Endothelial cell of umbilical vein (primary cell): ENCODE measurements at regions of chr15 and their contacts with region 1.

Region 1: DNA sequence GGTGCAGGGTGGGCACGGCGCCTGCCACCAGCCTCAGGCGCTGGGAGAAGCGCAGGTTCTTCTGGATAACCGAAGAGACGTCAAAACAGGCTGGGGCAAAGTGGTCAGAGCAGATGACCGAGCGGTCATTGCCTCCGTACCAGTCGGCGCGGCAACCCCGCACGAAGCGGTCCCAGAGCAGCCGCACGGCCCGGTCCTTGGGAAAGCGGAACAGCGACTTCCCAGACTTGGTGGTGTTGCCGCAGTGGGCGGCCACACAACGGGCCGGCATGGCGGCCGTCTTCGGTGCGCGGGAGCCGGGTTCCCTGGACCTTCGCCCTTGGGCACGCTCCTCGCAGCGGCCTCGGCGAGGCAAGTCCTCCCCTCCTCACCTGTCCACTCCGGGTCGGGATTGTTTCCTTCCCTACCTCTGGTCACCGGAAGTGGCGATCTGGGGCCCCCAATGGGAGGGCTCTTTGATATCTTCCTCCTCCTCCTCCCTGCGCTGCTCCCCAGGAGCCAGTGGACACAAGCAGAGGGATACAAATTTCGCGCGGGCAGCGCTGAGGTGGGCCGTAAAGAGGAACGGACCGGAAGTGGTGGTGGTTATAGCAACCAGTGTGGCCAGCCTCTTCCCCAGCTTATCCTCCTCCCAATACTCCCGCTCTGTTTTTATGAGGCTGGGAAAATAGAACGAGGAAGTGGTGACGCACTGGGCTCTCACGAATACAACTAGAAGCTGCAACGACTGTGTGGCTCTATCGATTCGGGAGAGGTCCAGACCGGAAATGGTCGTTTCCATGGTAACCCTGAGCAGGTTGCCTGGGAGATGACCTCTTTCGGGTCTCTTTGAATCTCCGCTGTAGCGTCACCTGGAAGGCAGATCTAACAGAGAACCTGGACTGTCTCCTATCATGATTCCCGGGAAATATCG is at the starts of genes LRRC49 and THAP10:
- DNase-seq: peak; percentile 98
- H3K4me3 ChIP-seq: peak within 1 kb of the TSS; percentile 47 to 81 (median 69)
- H3K27ac ChIP-seq: peak within 1 kb of the TSS; percentile 86
- H3K4me1 ChIP-seq: peaks cover 17% of the 10 kb centered on the region
- H3K27me3 ChIP-seq: no peaks in the 10 kb centered on the region
- CTCF ChIP-seq: no peak
- POLR2A ChIP-seq: no peak
- total RNA-seq, gene LRRC49: 6.6 and 7.4 TPM in 2 replicates
- total RNA-seq, gene THAP10: 2.7 and 4.0 TPM in 2 replicates

Region 2: DNA sequence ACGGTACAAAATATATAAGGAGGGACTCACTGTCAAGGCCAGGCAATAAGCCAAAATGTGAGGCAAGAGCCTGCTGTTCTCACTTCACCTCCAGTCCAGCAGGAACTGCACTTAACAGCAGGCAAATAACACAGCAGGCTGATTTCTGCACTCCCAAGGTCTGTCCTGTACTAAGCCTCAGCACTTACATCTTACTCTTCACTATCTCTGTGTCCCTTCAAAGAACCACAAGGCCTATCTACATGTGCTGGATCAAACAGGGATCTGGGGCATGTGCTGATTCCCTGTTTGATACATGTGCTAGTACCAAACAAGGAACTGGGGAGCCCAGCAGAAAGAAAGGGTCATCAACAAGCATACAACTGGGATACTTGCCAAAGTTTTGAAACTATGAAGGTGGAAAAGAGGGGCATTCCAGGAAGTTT is 151.1 kb before region 1 on chr15:
- CTCF ChIA-PET with region 1: no interaction called
- POLR2A ChIA-PET with region 1: no interaction called
- dilution Hi-C with region 1: no loop called
- intact Hi-C with region 1: no loop called
- DNase-seq: peak; percentile 78
- H3K4me3 ChIP-seq: no peak overlapping the region
- H3K27ac ChIP-seq: peak overlapping the region; percentile 66
- H3K4me1 ChIP-seq: peaks cover 27% of the 10 kb centered on the region
- H3K27me3 ChIP-seq: no peaks in the 10 kb centered on the region
- CTCF ChIP-seq: no peak
- POLR2A ChIP-seq: no peak

Region 3: DNA sequence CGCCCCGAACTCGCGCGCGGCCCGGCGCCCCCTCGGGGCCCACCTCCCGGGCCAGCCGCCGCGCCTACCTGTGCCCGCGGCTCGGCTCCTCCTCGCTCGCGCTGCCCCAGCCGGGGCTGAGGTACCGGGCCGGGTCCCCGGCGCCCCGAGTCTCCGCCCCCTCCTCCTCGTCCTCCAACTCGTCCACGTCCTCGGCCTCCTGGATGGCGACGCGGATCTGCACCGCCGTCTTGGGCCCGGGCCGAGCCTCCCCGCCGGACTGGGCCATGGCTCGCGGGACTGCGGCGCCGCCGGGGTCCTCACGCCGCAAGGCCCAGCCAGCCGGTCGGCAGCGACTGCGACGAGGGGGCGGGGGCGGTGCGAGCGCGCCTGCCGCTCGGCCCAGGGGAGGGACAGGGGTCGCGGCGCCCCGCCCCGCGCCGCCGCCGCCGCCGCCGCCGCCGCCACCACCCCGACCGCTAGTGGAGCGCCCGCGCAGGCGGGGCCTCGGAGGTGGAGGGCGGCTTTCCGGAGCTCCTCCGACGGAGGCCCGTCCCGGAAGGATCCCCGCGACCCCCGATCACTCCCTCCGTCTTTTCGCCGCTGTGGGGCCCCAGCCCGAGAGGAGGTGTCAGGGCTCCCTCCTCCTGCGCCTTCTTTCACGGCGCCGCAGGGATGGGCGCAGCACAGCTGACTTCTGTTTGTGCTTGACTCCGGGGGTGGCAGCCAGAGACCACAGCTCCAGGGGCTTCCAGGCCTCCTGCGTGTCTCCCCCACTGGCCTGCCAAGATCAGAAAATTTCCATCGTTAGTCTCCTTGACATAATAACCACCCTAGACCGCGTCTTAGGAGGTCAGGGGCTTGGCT is 38.2 kb before region 1 on chr15 and contains the start of gene LARP6:
- CTCF ChIA-PET with region 1: interaction called, 4 read pairs
- POLR2A ChIA-PET with region 1: interaction called, 3 read pairs
- dilution Hi-C with region 1: no loop called
- intact Hi-C with region 1: loop called (anchors 2 kb)
- DNase-seq: peak; percentile 60
- H3K4me3 ChIP-seq: peak within 1 kb of the TSS; percentile 61 to 76 (median 66)
- H3K27ac ChIP-seq: peak within 1 kb of the TSS; percentile 60
- H3K4me1 ChIP-seq: peaks cover 26% of the 10 kb centered on the region
- H3K27me3 ChIP-seq: no peaks in the 10 kb centered on the region
- CTCF ChIP-seq: no peak
- POLR2A ChIP-seq: peak; percentile 55
- total RNA-seq, gene LARP6: 16.9 and 25.2 TPM in 2 replicates